ENCODE measurements at regions of chr21 and their contacts with region 1.

Region 1: GRCh38 chr21:30194701-30195299 is 21.1 kb downstream of the CLDN8 start:
- DNase-seq: no peak
- ATAC-seq: no peak
- H3K4me3 ChIP-seq: no peak overlapping the region
- H3K27ac ChIP-seq: no peak overlapping the region
- H3K4me1 ChIP-seq: no peaks in the 10 kb centered on the region
- H3K27me3 ChIP-seq: no peaks in the 10 kb centered on the region
- CTCF ChIP-seq: no peak; the same call in 1 of the 2 replicates

Region 2: GRCh38 chr21:29914326-29914725 is 280.5 kb before region 1 on chr21:
- CTCF ChIA-PET with region 1: no interaction called
- POLR2A ChIA-PET with region 1: no interaction called
- in situ Hi-C with region 1: no loop called
- intact Hi-C with region 1: no loop called
- DNase-seq: no peak
- ATAC-seq: no peak
- H3K4me3 ChIP-seq: no peak overlapping the region
- H3K27ac ChIP-seq: no peak overlapping the region
- H3K4me1 ChIP-seq: no peaks in the 10 kb centered on the region
- H3K27me3 ChIP-seq: no peaks in the 10 kb centered on the region
- CTCF ChIP-seq: no peak

Region 3: DNA sequence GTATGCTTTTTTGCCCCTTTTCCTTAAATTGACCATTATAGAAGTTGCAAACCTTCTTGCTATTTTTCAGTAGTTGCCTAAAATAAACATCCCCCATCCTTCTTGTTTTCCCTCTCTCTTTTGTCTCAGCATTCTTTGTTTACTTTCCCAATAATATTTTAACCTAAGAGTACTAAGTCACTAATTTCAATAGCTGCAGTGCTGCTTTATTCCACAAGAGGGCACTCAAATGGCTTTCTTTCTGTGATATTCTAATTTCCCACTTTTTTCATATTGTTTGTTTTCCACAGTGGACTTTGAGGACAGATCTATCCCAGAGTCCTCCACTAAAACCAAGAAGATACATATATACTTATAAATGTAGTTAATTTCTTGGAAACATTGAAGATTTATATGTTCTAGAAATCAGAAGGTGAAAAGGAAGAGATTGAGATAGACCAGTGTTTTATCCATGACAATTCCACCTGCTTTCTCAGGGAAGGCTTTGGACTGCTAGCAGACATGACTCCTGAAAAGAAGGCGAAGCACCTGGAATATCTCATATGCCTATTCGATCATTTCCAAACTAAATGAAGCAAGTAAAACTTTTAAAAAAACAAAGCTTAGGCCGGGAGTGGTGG is 150.2 kb before region 1 on chr21:
- CTCF ChIA-PET with region 1: no interaction called
- POLR2A ChIA-PET with region 1: no interaction called
- in situ Hi-C with region 1: no loop called
- intact Hi-C with region 1: loop called (anchors 10 kb)
- DNase-seq: peak; percentile 4
- ATAC-seq: no peak
- H3K4me3 ChIP-seq: no peak overlapping the region
- H3K27ac ChIP-seq: no peak overlapping the region
- H3K4me1 ChIP-seq: no peaks in the 10 kb centered on the region
- H3K27me3 ChIP-seq: no peaks in the 10 kb centered on the region
- CTCF ChIP-seq: peak; percentile 72; the same call in 1 of the 2 replicates

Region 4: GRCh38 chr21:30395731-30396130 is 200.9 kb after region 1 on chr21 and contains the start of gene KRTAP13-1:
- CTCF ChIA-PET with region 1: no interaction called
- POLR2A ChIA-PET with region 1: no interaction called
- in situ Hi-C with region 1: no loop called
- intact Hi-C with region 1: no loop called
- DNase-seq: no peak
- ATAC-seq: no peak
- H3K4me3 ChIP-seq: no peak within 1 kb of the TSS
- H3K27ac ChIP-seq: no peak within 1 kb of the TSS
- H3K4me1 ChIP-seq: no peaks in the 10 kb centered on the region
- H3K27me3 ChIP-seq: no peaks in the 10 kb centered on the region
- CTCF ChIP-seq: no peak
- total RNA-seq, gene KRTAP13-1: not detected